Activated CD4-positive, alpha-beta T cell treated with anti-CD3 and anti-CD28 coated beads, Interleukin-2, amount 10 ng/mL, durations not matched to agents 24 days and 14 days (primary cell): ENCODE measurements at regions of chr17 and their contacts with region 1.

Region 1: DNA sequence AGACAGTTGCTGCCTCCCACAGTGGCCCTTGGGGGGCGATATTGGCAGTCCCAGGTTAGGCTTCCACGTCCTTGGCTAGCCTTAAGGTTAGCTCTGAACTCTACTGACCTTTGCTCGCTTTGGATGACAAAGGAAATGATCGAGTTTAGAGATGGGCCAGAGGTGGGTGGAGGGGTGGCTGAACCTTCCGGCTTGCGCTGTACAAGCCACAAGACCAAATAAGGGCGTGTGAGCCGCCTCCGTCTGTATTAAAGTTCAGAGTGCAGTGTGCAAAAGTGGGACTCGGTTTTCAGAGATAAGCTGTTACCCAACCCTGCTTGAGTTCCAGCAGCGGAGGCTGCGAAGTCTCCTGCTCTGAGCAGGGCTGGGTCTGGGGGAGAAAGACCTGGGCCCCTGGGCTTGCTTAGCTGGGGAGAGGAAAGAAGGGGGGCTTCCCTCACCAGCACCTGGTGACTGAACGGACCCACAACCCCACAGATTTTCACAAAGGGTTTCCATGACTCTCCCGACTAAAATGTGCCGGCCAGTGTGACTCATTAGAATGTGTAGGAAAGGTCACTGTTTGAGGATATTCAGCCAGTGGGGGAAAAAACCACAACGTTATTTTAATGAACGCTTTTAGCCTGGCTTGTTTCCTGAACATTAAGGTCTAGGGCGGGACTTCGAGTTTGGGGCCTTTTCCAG is 67.2 kb downstream of the CENPV start:
- DNase-seq: peak; percentile 93
- H3K4me3 Mint-ChIP-seq: peak overlapping the region; percentile 83
- H3K27ac Mint-ChIP-seq: peak overlapping the region; percentile 99
- H3K4me1 Mint-ChIP-seq: peaks cover 51% of the 10 kb centered on the region
- H3K27me3 Mint-ChIP-seq: no peaks in the 10 kb centered on the region

Region 2: GRCh38 chr17:16027708-16028584 is 258.2 kb before region 1 on chr17:
- intact Hi-C with region 1: loop called (anchors 2 kb)
- DNase-seq: peak; percentile 78
- H3K4me3 Mint-ChIP-seq: peak overlapping the region; percentile 71
- H3K27ac Mint-ChIP-seq: peak overlapping the region; percentile 93
- H3K4me1 Mint-ChIP-seq: peaks cover 20% of the 10 kb centered on the region
- H3K27me3 Mint-ChIP-seq: no peaks in the 10 kb centered on the region

Region 3: GRCh38 chr17:16232391-16232790 is 53.7 kb before region 1 on chr17:
- intact Hi-C with region 1: loop called (anchors 1 kb)
- DNase-seq: no peak
- H3K4me3 Mint-ChIP-seq: no peak overlapping the region
- H3K27ac Mint-ChIP-seq: no peak overlapping the region
- H3K4me1 Mint-ChIP-seq: peaks cover 15% of the 10 kb centered on the region
- H3K27me3 Mint-ChIP-seq: no peaks in the 10 kb centered on the region

Region 4: GRCh38 chr17:16297367-16298139 is 11.5 kb after region 1 on chr17:
- intact Hi-C with region 1: no loop called
- DNase-seq: no peak
- H3K4me3 Mint-ChIP-seq: no peak overlapping the region
- H3K27ac Mint-ChIP-seq: no peak overlapping the region
- H3K4me1 Mint-ChIP-seq: peaks cover 14% of the 10 kb centered on the region
- H3K27me3 Mint-ChIP-seq: no peaks in the 10 kb centered on the region

Region 5: DNA sequence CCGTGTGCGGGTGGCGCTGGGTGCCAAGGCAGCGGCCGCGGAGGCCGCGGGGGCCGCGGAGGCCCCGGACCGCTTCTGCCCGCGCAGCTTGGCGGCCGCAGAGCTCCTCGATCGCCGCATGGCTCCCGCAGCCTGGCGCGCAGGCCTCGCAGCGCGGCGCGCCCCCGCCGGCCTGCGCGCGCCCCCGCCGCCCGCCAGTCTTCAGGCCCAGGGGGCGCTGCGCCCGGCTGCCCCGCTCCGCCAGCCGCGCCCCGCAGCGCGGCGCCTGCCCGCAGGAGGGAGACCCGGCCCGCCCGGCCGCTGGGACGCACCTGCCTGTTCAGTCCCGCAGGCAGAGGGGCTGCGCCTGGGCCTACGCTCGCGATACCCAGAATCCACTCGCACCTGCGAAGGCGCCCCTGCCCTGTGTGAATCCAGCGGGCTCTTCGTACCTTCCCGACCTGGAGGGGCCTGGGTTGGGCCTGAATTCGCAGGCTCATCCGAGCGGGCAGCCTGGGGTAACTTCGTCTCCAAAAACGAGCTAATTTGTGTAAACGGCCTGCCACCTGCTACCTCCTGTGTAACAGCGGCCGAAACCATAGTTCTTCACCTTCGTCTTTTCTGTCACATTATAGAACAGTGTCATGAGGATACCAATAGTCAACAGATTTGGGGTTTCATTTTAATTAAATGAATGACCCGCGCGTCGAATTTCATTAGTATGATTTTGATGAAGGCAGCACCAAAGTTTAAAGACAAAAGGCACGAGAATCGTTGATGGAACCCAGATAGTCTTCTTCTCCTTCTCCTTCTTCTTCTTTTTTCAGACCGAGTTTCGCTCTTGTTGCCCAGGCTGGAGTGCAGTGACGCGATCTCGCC is 67.4 kb after region 1 on chr17 and contains the start of gene CENPV:
- intact Hi-C with region 1: loop called (anchors 2 kb)
- DNase-seq: peak; percentile 89
- H3K4me3 Mint-ChIP-seq: peak within 1 kb of the TSS; percentile 88
- H3K27ac Mint-ChIP-seq: peak within 1 kb of the TSS; percentile 84
- H3K4me1 Mint-ChIP-seq: peaks cover 14% of the 10 kb centered on the region
- H3K27me3 Mint-ChIP-seq: peaks cover 19% of the 10 kb centered on the region
- total RNA-seq, gene CENPV: 52.8 and 53.0 TPM in 2 replicates

Region 6: DNA sequence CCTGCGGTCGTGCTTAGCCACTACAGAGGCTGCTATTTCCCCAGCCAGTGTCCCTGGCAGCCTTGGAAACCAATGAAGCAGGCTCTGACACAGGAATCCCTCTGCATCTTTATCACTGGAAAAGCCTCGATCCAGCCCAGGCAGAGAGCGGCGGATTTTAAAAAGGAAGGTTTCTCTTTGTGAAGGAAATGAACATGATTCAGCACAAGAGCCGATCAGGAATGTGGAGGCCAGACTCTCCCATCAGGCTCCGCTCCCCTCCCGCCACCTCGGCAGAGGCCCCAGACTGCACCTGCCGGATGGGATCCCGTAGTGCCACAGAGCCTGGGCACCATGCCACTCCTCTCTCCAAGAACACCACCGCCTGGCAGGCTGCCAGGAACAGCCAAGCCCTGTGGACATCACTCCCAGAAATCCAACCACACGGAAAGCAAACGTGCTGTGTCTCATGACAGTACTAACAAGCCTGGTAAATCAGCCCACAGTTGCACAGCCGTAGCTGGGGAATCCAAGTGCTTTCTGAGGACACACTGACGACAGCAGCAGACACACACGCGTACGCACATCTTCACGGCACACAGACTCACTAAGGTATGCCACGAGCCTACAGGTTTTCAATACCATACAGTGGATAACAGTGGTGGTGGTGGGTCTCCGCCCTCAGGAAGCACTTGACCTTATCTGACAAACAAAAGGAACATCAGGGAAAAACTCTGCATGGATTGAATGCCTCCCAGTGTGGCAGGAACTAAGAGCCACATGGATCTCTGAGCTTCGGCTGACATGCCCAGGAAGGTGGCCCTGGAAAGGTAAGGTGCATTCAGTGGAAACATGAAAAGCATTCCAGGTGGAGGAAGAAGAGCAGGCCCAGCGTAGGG is 200.5 kb after region 1 on chr17:
- intact Hi-C with region 1: no loop called
- DNase-seq: no peak
- H3K4me3 Mint-ChIP-seq: no peak overlapping the region
- H3K27ac Mint-ChIP-seq: no peak overlapping the region
- H3K4me1 Mint-ChIP-seq: peaks cover 2% of the 10 kb centered on the region
- H3K27me3 Mint-ChIP-seq: peaks cover 19% of the 10 kb centered on the region